ENCODE measurements at regions of chr5 and their contacts with region 1.

Region 1: DNA sequence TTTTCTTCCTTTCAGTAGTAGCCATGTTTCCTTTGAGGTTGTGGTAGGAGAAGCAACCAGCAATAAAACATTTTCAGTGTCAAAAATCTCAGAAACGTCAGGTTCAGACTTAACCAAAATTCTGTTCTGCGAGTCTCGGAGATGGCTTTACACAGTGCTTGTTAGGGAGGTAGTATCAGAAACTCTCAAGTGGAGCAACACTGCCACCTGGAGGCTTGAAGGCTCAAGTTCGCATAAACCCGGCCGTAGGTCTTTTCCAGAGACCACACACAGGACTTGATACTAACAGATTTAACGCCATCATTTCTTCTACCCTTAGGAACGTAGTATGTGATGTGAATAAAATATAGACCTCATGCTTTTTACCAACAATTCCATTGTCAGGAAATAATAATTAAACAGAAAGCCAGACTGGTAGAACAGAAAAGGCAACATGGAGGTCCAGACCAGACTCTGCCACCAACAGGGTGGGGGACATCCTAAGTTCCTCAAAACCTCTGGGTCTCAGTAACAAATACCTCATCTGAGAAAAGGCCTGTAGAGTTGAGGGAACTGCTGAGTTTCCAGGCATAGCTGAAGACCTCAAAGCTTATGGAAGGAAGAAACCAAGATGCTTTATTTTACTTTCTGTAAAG is 8.5 kb downstream of the PTGER4 start:
- DNase-seq: peak; percentile 68
- ATAC-seq: peak; percentile 99
- H3K4me3 ChIP-seq: no peak overlapping the region
- H3K27ac ChIP-seq: no peak overlapping the region
- H3K4me1 ChIP-seq: no peaks in the 10 kb centered on the region
- H3K27me3 ChIP-seq: no peaks in the 10 kb centered on the region
- CTCF ChIP-seq: peak; percentile 90
- EP300 ChIP-seq: no peak
- POLR2A ChIP-seq: no peak
- RAD21 ChIP-seq: peak; percentile 85

Region 2: GRCh38 chr5:39578887-39579497 is 1109.3 kb before region 1 on chr5:
- CTCF ChIA-PET with region 1: interaction called, 15 read pairs
- POLR2A ChIA-PET with region 1: no interaction called
- in situ Hi-C with region 1: loop called (anchors 25 kb)
- intact Hi-C with region 1: loop called (anchors 1 kb)
- DNase-seq: no peak
- ATAC-seq: no peak
- H3K4me3 ChIP-seq: no peak overlapping the region
- H3K27ac ChIP-seq: no peak overlapping the region
- H3K4me1 ChIP-seq: no peaks in the 10 kb centered on the region
- H3K27me3 ChIP-seq: no peaks in the 10 kb centered on the region
- CTCF ChIP-seq: no peak
- EP300 ChIP-seq: no peak
- POLR2A ChIP-seq: no peak
- RAD21 ChIP-seq: no peak

Region 3: DNA sequence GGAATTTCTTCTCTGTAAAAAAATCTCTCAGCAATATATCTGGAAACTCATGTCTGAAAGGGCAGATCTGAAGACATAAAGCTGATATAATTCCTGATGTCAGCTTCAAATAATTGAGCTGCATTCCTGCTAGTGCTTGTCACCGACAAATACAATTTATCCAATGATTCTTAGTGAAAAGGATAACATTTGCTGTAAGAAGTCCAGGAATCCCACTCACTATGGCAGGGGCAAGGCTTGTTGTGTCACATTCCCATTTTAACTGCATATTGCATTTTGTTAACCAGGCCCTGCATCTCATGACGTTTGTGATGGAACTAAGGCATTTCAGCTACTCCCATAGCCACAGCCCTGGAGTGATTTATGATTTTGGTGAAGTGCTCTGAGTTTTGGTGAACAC is 1103.3 kb before region 1 on chr5:
- CTCF ChIA-PET with region 1: no interaction called
- POLR2A ChIA-PET with region 1: no interaction called
- in situ Hi-C with region 1: loop called (anchors 25 kb)
- intact Hi-C with region 1: loop called (anchors 5 kb)
- DNase-seq: no peak
- ATAC-seq: no peak
- H3K4me3 ChIP-seq: no peak overlapping the region
- H3K27ac ChIP-seq: no peak overlapping the region
- H3K4me1 ChIP-seq: no peaks in the 10 kb centered on the region
- H3K27me3 ChIP-seq: peaks cover 0 to 1% of the 10 kb centered on the region in 2 experiments; a peak in 1 of 5 replicates
- CTCF ChIP-seq: no peak
- EP300 ChIP-seq: no peak
- POLR2A ChIP-seq: no peak
- RAD21 ChIP-seq: no peak

Region 4: GRCh38 chr5:39599721-39600431 is 1088.4 kb before region 1 on chr5:
- CTCF ChIA-PET with region 1: no interaction called
- POLR2A ChIA-PET with region 1: no interaction called
- in situ Hi-C with region 1: loop called (anchors 25 kb)
- intact Hi-C with region 1: no loop called
- DNase-seq: no peak
- ATAC-seq: peak; percentile 45; the same call in 2 of the 3 replicates
- H3K4me3 ChIP-seq: no peak overlapping the region
- H3K27ac ChIP-seq: no peak overlapping the region
- H3K4me1 ChIP-seq: no peaks in the 10 kb centered on the region
- H3K27me3 ChIP-seq: no peaks in the 10 kb centered on the region
- CTCF ChIP-seq: peak; percentile 38
- EP300 ChIP-seq: no peak
- POLR2A ChIP-seq: no peak
- RAD21 ChIP-seq: no peak

Region 5: DNA sequence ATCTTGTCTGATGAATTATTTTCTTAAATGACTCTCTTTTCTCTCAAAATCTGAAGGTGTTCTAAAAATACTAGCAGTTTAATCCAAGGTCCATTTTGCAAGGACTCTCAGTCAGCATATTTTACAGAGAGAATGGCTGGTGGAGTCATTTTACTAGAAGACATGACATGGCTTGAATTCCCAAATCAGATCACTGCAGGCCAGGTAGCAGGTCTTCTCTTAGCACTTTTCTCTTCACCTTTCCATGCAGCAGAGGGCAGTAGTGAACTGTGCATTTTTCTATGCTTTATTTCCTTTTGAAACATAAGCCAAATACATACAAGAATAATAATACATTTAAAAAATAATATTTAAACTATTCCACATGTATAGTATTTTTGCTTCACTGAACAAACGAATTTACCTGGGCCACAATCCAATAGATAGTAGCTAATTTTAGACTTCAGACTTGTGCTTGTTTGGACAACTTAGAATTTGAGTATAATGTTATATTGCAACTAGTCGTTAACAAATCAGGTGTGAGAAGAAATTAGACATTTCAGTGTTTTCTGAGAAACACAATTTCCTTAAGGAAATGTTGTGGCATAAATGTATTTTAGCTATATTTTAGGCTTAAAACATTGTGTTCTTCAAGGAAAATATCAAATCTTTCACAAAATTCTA is 974.1 kb before region 1 on chr5:
- CTCF ChIA-PET with region 1: interaction called, 33 read pairs
- POLR2A ChIA-PET with region 1: no interaction called
- in situ Hi-C with region 1: loop called (anchors 10 kb)
- intact Hi-C with region 1: loop called (anchors 1 kb)
- DNase-seq: peak; percentile 41
- ATAC-seq: peak; percentile 53
- H3K4me3 ChIP-seq: no peak overlapping the region
- H3K27ac ChIP-seq: no peak overlapping the region
- H3K4me1 ChIP-seq: peaks cover 6% of the 10 kb centered on the region; the same call in 1 of the 2 replicates
- H3K27me3 ChIP-seq: no peaks in the 10 kb centered on the region
- CTCF ChIP-seq: peak; percentile 63
- EP300 ChIP-seq: no peak
- POLR2A ChIP-seq: no peak
- RAD21 ChIP-seq: 0 out of 2 replicates have a peak, but pooled peaks have one; percentile 18

Region 6: DNA sequence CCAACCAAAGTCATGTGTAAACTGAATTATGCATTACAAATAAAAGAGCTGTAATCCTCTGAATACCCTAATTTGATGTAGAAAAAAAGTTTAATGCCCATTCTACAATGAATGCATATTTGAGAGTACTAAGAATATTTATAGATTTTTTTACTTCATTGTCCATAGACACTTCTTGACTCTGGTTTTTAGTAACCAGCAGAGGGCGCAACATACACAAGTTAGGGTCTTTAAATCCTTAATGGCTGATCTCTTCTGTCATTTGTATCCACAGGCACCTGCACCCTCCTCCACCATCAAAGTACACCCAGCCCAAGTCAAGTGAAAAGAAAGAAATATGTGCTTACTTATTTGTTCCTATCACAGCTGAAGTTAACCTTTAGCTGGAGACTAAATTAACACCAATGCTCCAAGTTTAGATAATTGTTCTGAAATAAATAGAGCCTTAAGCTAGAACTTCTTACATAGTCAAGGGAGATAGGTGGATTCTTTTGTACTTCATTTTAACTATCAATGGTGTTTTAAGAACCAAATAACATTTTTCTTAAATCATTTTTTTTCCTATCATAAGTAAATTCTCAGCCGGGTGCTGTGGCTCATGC is 739.3 kb before region 1 on chr5:
- CTCF ChIA-PET with region 1: interaction called, 35 read pairs
- POLR2A ChIA-PET with region 1: no interaction called
- in situ Hi-C with region 1: loop called (anchors 5 kb)
- intact Hi-C with region 1: loop called (anchors 1 kb)
- DNase-seq: peak; percentile 68
- ATAC-seq: peak; percentile 86
- H3K4me3 ChIP-seq: no peak overlapping the region
- H3K27ac ChIP-seq: no peak overlapping the region
- H3K4me1 ChIP-seq: no peaks in the 10 kb centered on the region
- H3K27me3 ChIP-seq: no peaks in the 10 kb centered on the region
- CTCF ChIP-seq: peak; percentile 64
- EP300 ChIP-seq: no peak
- POLR2A ChIP-seq: no peak
- RAD21 ChIP-seq: peak; percentile 42; the same call in 1 of the 2 replicates

Region 7: GRCh38 chr5:40736103-40736875 is 48.0 kb after region 1 on chr5:
- CTCF ChIA-PET with region 1: no interaction called
- POLR2A ChIA-PET with region 1: no interaction called
- in situ Hi-C with region 1: no loop called
- intact Hi-C with region 1: loop called (anchors 2 kb)
- DNase-seq: peak; percentile 48
- ATAC-seq: peak; percentile 69; the same call in 2 of the 3 replicates
- H3K4me3 ChIP-seq: no peak overlapping the region
- H3K27ac ChIP-seq: no peak overlapping the region
- H3K4me1 ChIP-seq: peaks cover 24% of the 10 kb centered on the region
- H3K27me3 ChIP-seq: no peaks in the 10 kb centered on the region
- CTCF ChIP-seq: peak; percentile 72
- EP300 ChIP-seq: no peak
- POLR2A ChIP-seq: no peak
- RAD21 ChIP-seq: peak; percentile 52; the same call in 1 of the 2 replicates

Measured in HepG2 (cell line).